Naive thymus-derived CD4-positive, alpha-beta T cell (primary cell): ENCODE measurements at regions of chr17 and their contacts with region 1.

Region 1: GRCh38 chr17:45051060-45051719 is at the start of gene DCAKD:
- DNase-seq: peak; percentile 78 to 93 (median 84)
- ATAC-seq: peak; percentile 99
- H3K4me3 ChIP-seq: peak within 1 kb of the TSS; percentile 61
- H3K4me3 Mint-ChIP-seq: peak within 1 kb of the TSS; percentile 87 to 96 (median 90)
- H3K27ac ChIP-seq: peak within 1 kb of the TSS; percentile 91
- H3K27ac Mint-ChIP-seq: peak within 1 kb of the TSS; percentile 85 to 98 (median 96)
- H3K4me1 ChIP-seq: peaks cover 19 to 26% of the 10 kb centered on the region in 2 donors
- H3K4me1 Mint-ChIP-seq: peaks cover 11 to 54% (median 41%) of the 10 kb centered on the region in 7 donors
- H3K27me3 ChIP-seq: no peaks in the 10 kb centered on the region
- H3K27me3 Mint-ChIP-seq: no peaks in the 10 kb centered on the region
- total RNA-seq, gene DCAKD: 14.2 to 36.8 (median 29.8) TPM

Region 2: DNA sequence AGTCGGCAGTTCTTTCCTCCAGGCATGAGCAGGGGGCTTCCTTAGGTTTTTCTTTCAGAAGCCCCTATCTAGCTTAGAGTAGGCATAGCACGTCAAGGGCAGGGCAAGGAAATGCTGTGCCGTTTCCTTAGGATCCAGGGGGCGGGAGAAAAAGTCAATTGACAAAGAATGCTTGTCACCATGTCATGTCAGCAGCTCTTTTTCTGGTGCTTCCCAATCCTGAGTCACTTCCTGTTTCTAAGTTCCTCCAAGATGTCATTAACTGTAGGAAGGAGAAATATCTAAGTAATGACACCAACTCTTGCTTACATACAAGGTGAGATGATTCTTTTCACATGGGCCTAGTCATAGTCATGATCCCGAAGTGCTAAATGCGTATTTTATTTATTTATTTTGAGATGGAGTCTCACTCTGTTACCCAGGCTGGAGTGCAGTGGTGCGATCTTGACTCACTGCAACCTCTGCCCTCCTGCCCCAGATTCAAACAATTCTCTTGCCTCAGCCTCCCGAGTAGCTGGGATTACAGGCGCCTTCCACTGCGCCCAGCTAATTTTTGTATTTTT is 256.3 kb before region 1 on chr17:
- CTCF ChIA-PET with region 1: no interaction called
- POLR2A ChIA-PET with region 1: no interaction called
- intact Hi-C with region 1: no loop called
- DNase-seq: no peak
- ATAC-seq: peak; percentile 86
- H3K4me3 ChIP-seq: no peak overlapping the region
- H3K4me3 Mint-ChIP-seq: no peak overlapping the region
- H3K27ac ChIP-seq: no peak overlapping the region
- H3K27ac Mint-ChIP-seq: no peak overlapping the region
- H3K4me1 ChIP-seq: no peaks in the 10 kb centered on the region
- H3K4me1 Mint-ChIP-seq: peaks cover 0 to 13% (median 0%) of the 10 kb centered on the region in 7 donors
- H3K27me3 ChIP-seq: no peaks in the 10 kb centered on the region
- H3K27me3 Mint-ChIP-seq: peaks cover 0 to 3% (median 0%) of the 10 kb centered on the region in 5 donors

Region 3: DNA sequence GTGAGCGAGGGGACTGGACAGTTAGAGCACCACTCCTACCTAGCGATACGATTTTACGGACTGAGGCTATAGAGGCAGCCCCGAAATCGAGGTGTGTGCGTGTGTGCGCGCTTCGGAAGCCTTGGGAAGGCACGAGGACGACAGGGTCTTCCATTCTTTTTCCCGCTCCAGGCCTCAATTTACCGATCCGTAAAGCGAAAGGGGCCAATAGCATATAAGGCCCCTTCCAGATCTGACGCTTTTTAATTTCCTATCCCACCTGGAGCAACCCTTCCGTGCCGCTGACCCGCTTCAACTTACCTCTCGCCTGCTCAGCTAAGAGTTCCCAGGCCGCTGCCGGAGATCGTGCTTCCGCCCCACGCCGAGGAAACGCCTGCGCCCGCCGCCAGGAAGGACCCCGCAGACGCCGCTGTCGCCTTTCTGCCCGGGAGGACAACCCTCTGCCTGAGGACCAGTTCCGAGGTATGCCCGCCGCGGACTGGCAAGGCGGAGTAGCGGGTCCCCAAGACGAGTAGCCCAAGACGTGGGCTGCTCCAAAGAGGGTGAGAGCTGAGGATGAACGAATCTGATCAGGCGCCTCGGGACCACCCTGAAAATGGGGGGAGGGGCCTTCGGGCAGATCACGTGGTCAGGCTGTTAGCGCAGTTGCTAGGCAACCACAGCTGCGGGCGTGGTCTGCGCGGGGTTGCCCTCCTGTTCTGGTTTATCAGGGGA is 152.0 kb before region 1 on chr17 and contains the start of gene EFTUD2:
- CTCF ChIA-PET with region 1: no interaction called
- POLR2A ChIA-PET with region 1: interaction called, 3 read pairs
- intact Hi-C with region 1: loop called in 1 of 2 experiments (anchors 1 kb)
- DNase-seq: peak; percentile 91 to 99 (median 96)
- ATAC-seq: peak; percentile 94
- H3K4me3 ChIP-seq: peak within 1 kb of the TSS; percentile 89
- H3K4me3 Mint-ChIP-seq: peak within 1 kb of the TSS; percentile 84 to 97 (median 96)
- H3K27ac ChIP-seq: peak within 1 kb of the TSS; percentile 96
- H3K27ac Mint-ChIP-seq: peak within 1 kb of the TSS; percentile 99 to 100 (median 99)
- H3K4me1 ChIP-seq: peaks cover 6 to 10% of the 10 kb centered on the region in 2 donors
- H3K4me1 Mint-ChIP-seq: peaks cover 26 to 41% (median 35%) of the 10 kb centered on the region in 7 donors
- H3K27me3 ChIP-seq: no peaks in the 10 kb centered on the region
- H3K27me3 Mint-ChIP-seq: peaks cover 0 to 23% (median 0%) of the 10 kb centered on the region in 5 donors
- total RNA-seq, gene EFTUD2: 94.3 to 157 (median 120) TPM

Region 4: GRCh38 chr17:44968226-44969143 is 82.7 kb before region 1 on chr17 and contains the start of gene C1QL1:
- CTCF ChIA-PET with region 1: no interaction called
- POLR2A ChIA-PET with region 1: no interaction called
- intact Hi-C with region 1: loop called in 1 of 2 experiments (anchors 5 kb)
- DNase-seq: peak; percentile 58 to 93 (median 69)
- ATAC-seq: peak; percentile 99
- H3K4me3 ChIP-seq: peak within 1 kb of the TSS; percentile 33
- H3K4me3 Mint-ChIP-seq: peak within 1 kb of the TSS; percentile 64 to 87 (median 78)
- H3K27ac ChIP-seq: no peak within 1 kb of the TSS
- H3K27ac Mint-ChIP-seq: peak within 1 kb of the TSS in 2 of 9 donors; percentile 16 to 55
- H3K4me1 ChIP-seq: peaks cover 19 to 24% of the 10 kb centered on the region in 2 donors
- H3K4me1 Mint-ChIP-seq: peaks cover 23 to 40% (median 29%) of the 10 kb centered on the region in 7 donors
- H3K27me3 ChIP-seq: peaks cover 14 to 21% of the 10 kb centered on the region in 2 donors
- H3K27me3 Mint-ChIP-seq: peaks cover 30 to 84% (median 45%) of the 10 kb centered on the region in 5 donors
- total RNA-seq, gene C1QL1: 0.29 TPM in 1 of 5 experiments, not detected in the others

Region 5: GRCh38 chr17:45098869-45099616 is 47.9 kb after region 1 on chr17:
- CTCF ChIA-PET with region 1: no interaction called
- POLR2A ChIA-PET with region 1: interaction called, 3 read pairs
- intact Hi-C with region 1: loop called in 1 of 2 experiments (anchors 5 kb)
- DNase-seq: peak; percentile 38 to 77 (median 66)
- ATAC-seq: peak; percentile 89
- H3K4me3 ChIP-seq: no peak overlapping the region
- H3K4me3 Mint-ChIP-seq: no peak overlapping the region
- H3K27ac ChIP-seq: no peak overlapping the region
- H3K27ac Mint-ChIP-seq: peak overlapping the region in 6 of 9 donors; percentile 4 to 87 (median 62)
- H3K4me1 ChIP-seq: no peaks in the 10 kb centered on the region
- H3K4me1 Mint-ChIP-seq: peaks cover 0 to 6% (median 0%) of the 10 kb centered on the region in 7 donors
- H3K27me3 ChIP-seq: no peaks in the 10 kb centered on the region
- H3K27me3 Mint-ChIP-seq: no peaks in the 10 kb centered on the region